Motor neuron (in vitro differentiated cells): ENCODE measurements at regions of chr18 and their contacts with region 1.

Region 1: DNA sequence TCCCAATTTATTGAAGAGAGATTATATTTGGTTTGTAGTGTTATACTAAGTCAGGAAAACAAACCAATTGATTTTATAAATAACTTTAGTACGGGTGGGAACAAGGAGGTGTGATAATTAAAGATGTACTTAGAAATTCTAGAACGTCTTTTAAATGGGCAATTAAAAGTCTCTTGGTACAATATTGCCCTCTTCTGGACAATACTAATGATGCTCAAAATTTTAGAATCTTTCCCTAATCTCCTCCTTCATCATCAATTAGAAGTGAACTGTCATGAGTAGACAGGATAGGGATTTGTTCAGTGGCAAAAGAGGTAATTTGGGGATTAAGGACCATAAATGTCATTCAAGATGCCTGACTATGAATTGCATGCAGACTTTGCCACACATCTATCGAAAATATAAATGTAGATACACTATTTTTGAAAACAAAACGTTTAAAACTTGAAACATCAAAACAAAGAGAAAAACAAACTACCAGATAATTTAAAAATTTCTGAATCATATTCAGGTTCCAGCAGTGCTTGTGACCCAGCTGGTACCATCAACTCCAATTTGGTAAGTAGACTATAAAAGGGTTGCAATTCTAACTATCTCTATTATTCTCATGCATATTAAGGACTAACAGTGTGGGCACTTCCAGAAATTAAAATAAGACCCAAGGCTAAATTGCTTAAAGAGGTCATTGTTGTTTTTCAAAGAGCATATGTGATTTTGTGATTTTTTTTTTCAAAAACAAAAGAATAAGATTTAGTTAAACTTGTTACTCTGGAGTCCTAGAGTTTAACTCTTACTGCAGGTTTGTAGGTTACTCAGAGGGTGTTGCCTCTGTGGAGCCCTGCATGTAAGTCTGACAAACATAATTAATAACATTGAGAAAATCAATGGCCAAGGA is 123.5 kb downstream of the LAMA3 start:
- ATAC-seq: peak in 1 of 8 experiments; percentile 59
- H3K4me3 ChIP-seq: no peak overlapping the region
- H3K27ac ChIP-seq: no peak overlapping the region
- H3K4me1 ChIP-seq: no peaks in the 10 kb centered on the region

Region 2: GRCh38 chr18:23356915-23357601 is 455.7 kb before region 1 on chr18:
- in situ Hi-C with region 1: no loop called
- ATAC-seq: no peak
- H3K4me3 ChIP-seq: no peak overlapping the region
- H3K27ac ChIP-seq: no peak overlapping the region
- H3K4me1 ChIP-seq: no peaks in the 10 kb centered on the region

Region 3: DNA sequence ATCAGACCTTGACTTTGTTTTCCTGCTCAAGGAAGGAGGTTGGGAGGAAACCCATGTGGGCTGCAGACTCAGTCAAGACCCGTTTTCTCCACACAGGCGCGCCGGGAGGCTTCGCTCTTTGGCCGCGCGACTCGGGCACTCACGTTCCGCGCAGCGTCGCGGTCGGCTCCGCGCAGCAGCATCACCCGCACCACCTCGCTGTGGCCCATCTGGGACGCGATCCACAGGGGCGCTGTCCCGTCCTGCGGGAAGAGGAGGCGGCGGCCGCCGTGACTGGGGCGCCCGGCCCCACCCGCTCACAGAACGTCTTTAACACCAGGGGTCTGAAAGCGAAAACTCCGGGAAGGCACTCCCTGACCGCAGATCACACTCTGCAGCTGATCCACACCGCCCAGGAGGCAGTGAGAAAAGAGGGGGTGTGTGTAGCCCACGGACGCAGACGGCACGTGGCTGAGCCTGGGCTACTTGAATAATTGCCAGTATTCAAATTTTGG is 193.4 kb before region 1 on chr18:
- in situ Hi-C with region 1: loop called in 1 of 9 experiments (anchors 25 kb)
- ATAC-seq: peak; percentile 76 to 91 (median 90)
- H3K4me3 ChIP-seq: peak overlapping the region; percentile 17 to 39 (median 18)
- H3K27ac ChIP-seq: no peak overlapping the region
- H3K4me1 ChIP-seq: peaks cover 0 to 4% of the 10 kb centered on the region in 2 donors

Region 4: DNA sequence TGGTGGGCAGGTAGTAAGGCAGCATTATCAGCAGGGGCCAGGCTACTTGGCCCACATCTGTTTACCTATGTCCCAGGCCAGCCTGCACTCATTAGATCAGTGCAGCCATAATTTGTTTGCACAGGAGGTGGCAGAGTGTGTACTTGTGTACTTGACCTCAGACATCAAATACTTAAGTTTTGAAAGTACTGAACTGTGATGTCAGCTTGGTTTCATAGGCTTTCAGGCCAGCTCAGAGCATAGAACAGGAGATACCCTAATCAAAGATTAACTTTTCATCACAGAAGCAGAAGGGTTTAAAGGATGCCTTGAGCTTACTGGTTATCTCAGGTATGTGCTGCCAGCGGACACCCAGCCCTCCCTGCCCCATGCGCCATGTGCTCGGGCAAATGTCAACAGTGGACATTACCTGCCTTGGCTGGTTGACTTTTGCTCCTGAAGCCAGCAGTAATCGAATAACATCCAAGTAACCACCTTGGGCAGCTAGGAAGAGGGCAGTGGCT is 183.3 kb before region 1 on chr18:
- in situ Hi-C with region 1: loop called in 2 of 9 experiments (anchors 25 kb)
- ATAC-seq: peak in 1 of 8 experiments; percentile 55
- H3K4me3 ChIP-seq: no peak overlapping the region
- H3K27ac ChIP-seq: no peak overlapping the region
- H3K4me1 ChIP-seq: no peaks in the 10 kb centered on the region

Region 5: GRCh38 chr18:23703057-23703986 is 109.5 kb before region 1 on chr18:
- in situ Hi-C with region 1: loop called in 2 of 9 experiments (anchors 25 kb)
- ATAC-seq: peak in 5 of 8 experiments; percentile 37 to 99 (median 95)
- H3K4me3 ChIP-seq: no peak overlapping the region
- H3K27ac ChIP-seq: no peak overlapping the region
- H3K4me1 ChIP-seq: no peaks in the 10 kb centered on the region

Region 6: DNA sequence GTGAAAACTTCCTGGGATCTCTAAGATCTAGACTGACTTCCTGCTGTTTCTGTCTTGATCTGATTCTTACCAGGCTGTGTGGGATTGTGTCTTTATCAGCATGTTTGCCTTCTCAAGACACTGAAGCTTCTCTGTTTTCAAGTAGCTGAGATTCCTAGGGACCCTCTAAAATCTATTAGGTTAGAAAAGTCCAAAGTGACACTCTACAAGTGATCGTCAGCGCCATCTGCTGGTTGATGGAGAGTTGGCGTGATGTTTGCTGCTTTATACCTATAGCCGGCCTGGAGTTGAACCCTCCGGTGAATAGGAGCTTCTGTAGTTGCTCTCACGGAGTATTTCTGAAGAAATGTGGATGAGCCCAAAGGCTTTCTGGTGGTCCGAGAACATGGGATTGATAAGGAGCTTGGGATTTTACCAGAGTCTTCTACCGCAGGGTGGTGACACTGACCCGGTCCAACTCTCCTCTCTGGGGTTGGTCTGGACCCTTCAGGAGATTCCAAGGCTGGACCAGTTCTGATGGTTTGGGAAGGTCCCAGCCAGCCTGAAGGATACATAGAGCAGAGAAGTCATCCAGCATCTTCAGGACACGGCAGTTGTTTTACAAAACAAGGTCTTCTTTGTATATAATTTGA is 105.7 kb after region 1 on chr18:
- in situ Hi-C with region 1: loop called in 1 of 9 experiments (anchors 25 kb)
- ATAC-seq: peak in 7 of 8 experiments; percentile 41 to 88 (median 71)
- H3K4me3 ChIP-seq: no peak overlapping the region
- H3K27ac ChIP-seq: no peak overlapping the region
- H3K4me1 ChIP-seq: no peaks in the 10 kb centered on the region

Region 7: GRCh38 chr18:24051031-24051947 is 238.5 kb after region 1 on chr18:
- in situ Hi-C with region 1: no loop called
- ATAC-seq: no peak
- H3K4me3 ChIP-seq: no peak overlapping the region
- H3K27ac ChIP-seq: no peak overlapping the region
- H3K4me1 ChIP-seq: peaks cover 3 to 8% of the 10 kb centered on the region in 2 donors

Region 8: DNA sequence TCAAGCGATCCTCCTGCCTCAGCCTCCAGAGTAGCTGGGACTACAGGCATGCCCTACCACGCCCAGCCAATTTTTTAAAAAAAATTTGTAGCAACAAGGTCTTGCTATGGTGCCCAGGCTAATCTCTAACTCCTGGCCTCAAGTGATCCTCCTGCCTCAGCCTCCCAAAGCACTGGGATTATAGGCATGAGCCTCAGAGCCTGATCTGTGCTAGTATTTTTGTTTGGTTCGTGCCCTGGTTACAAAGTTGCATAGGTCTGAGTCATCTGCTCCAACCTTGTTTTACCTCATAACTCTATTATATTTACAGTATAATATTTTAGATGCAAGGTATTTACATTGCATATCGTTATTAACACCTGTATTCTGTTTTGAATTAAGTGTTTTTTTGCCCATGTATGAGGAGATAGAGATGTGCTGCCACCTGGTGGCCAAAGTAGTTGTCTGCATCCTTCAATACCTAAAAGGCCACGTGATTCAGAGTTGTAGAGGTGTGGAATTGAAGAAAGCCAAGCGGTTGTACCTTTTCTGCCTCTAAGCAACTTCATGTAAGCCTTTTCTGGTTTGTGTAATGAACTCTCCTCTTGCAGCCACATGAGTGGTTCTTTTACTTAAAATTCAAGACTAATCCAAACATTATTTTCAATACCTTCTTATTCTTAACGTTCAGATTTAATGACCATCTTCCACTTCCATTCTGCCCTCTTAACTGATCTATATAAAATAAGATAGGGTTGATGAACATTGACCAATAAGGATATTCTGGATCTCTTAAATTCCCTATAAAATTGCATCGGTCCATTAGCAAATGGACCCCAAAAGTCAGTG is 306.2 kb after region 1 on chr18:
- in situ Hi-C with region 1: no loop called
- ATAC-seq: peak; percentile 30 to 72 (median 46)
- H3K4me3 ChIP-seq: no peak overlapping the region
- H3K27ac ChIP-seq: no peak overlapping the region
- H3K4me1 ChIP-seq: no peaks in the 10 kb centered on the region